ENCODE measurements at regions of chr2 and their contacts with region 1.

Region 1: GRCh38 chr2:240434728-240435456 is 571 bp upstream of the GPC1 start:
- DNase-seq: peak; percentile 97
- H3K4me3 Mint-ChIP-seq: peak overlapping the region; percentile 75
- H3K27ac Mint-ChIP-seq: peak overlapping the region; percentile 36
- H3K4me1 Mint-ChIP-seq: peaks cover 21% of the 10 kb centered on the region
- H3K27me3 Mint-ChIP-seq: peaks cover 14% of the 10 kb centered on the region
- CTCF ChIP-seq: no peak

Region 2: GRCh38 chr2:240149943-240150784 is 284.7 kb before region 1 on chr2:
- CTCF ChIA-PET with region 1: no interaction called
- intact Hi-C with region 1: loop called (anchors 1 kb)
- DNase-seq: peak; percentile 64
- H3K4me3 Mint-ChIP-seq: no peak overlapping the region
- H3K27ac Mint-ChIP-seq: no peak overlapping the region
- H3K4me1 Mint-ChIP-seq: no peaks in the 10 kb centered on the region
- H3K27me3 Mint-ChIP-seq: peaks cover 98% of the 10 kb centered on the region
- CTCF ChIP-seq: peak; percentile 92

Region 3: GRCh38 chr2:240232961-240233893 is 201.7 kb before region 1 on chr2:
- CTCF ChIA-PET with region 1: interaction called, 3 read pairs
- intact Hi-C with region 1: loop called (anchors 2 kb)
- DNase-seq: peak; percentile 93
- H3K4me3 Mint-ChIP-seq: peak overlapping the region; percentile 57
- H3K27ac Mint-ChIP-seq: no peak overlapping the region
- H3K4me1 Mint-ChIP-seq: peaks cover 30% of the 10 kb centered on the region
- H3K27me3 Mint-ChIP-seq: peaks cover 8% of the 10 kb centered on the region
- CTCF ChIP-seq: peak; percentile 93

Region 4: GRCh38 chr2:240300261-240300821 is 134.6 kb before region 1 on chr2:
- CTCF ChIA-PET with region 1: no interaction called
- intact Hi-C with region 1: loop called (anchors 10 kb)
- DNase-seq: no peak
- H3K4me3 Mint-ChIP-seq: no peak overlapping the region
- H3K27ac Mint-ChIP-seq: no peak overlapping the region
- H3K4me1 Mint-ChIP-seq: no peaks in the 10 kb centered on the region
- H3K27me3 Mint-ChIP-seq: peaks cover 62% of the 10 kb centered on the region
- CTCF ChIP-seq: no peak

Region 5: DNA sequence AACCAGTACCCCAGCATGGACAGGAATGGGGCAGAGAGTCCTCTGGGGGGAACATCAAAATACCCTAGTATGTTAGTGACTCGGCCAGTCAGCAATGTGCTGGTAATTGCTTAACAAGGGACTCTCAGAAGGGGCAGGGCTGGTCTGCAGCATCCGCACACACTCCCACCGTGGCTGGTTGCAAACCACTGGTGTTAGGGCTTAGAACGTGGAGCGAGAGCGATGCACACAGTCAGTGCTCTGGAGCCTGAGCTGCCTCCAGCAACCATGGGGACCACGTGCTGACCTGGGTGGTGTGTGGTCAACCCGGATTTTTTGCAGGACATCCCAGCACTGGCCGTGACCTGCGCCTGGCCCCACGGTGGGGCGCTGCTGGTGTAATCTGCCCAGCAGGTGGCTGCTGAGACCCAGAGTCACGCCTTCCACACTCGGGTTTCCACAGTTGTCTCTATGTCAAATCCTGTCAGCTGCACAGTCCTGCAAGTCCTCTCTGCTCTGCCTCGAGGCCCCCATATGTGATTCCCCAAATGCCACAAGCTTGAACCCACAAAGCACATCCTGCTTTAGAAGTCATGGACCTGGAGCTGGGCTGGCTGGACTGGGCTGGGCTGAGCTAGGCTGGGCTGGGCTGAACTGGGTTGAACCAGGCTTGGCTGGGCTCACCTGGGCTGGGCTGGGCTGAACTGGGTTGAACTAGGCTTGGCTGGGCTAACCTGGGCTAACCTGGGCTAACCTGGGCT is 50.0 kb before region 1 on chr2:
- CTCF ChIA-PET with region 1: interaction called, 14 read pairs
- intact Hi-C with region 1: no loop called
- DNase-seq: no peak
- H3K4me3 Mint-ChIP-seq: no peak overlapping the region
- H3K27ac Mint-ChIP-seq: no peak overlapping the region
- H3K4me1 Mint-ChIP-seq: peaks cover 8% of the 10 kb centered on the region
- H3K27me3 Mint-ChIP-seq: peaks cover 16% of the 10 kb centered on the region
- CTCF ChIP-seq: no peak

Region 6: GRCh38 chr2:240452457-240453256 is 17.8 kb after region 1 on chr2:
- CTCF ChIA-PET with region 1: no interaction called
- intact Hi-C with region 1: no loop called
- DNase-seq: peak; percentile 87
- H3K4me3 Mint-ChIP-seq: peak overlapping the region; percentile 66
- H3K27ac Mint-ChIP-seq: peak overlapping the region; percentile 70
- H3K4me1 Mint-ChIP-seq: peaks cover 23% of the 10 kb centered on the region
- H3K27me3 Mint-ChIP-seq: peaks cover 17% of the 10 kb centered on the region
- CTCF ChIP-seq: no peak

Region 7: DNA sequence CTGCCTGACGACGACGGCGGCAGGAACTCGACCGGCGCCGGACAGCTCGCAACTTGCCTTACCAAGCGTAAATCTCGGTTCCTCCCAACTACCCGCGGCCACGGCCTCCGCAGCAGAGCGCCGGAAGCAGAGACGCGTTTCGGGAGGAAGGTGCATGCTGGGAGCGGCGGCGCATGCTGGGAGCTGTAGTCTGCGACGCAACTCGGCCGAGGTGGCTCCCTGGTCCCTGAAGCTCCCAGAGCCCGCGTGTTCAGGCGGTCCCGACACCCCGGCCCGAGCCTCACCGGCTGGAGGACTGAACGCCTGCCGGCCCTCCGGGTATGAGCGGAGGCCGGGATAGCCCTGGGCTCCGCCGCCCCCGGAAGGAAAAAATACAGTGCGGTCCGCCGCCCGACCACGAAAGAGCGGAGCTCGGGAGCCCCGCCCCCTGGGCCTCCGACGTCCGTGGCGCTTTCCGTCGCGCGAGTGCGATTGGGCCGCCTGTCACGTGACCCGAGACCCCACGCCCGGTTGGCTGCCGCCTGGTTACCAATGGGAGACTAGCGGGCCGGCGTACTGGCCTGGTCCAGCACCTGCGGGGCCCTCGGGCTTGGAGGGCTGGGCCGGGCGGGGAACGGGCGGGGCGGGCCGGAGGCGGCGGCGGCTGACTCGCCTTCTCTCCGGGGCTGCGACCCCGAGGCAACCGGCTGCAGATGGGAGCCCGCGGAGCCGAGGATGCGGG is 151.5 kb after region 1 on chr2 and contains the start of gene CAPN10:
- CTCF ChIA-PET with region 1: no interaction called
- intact Hi-C with region 1: no loop called
- DNase-seq: peak; percentile 98
- H3K4me3 Mint-ChIP-seq: peak within 1 kb of the TSS; percentile 94
- H3K27ac Mint-ChIP-seq: peak within 1 kb of the TSS; percentile 84
- H3K4me1 Mint-ChIP-seq: peaks cover 38% of the 10 kb centered on the region
- H3K27me3 Mint-ChIP-seq: no peaks in the 10 kb centered on the region
- CTCF ChIP-seq: no peak
- total RNA-seq, gene CAPN10: 49.3 and 52.6 TPM in 2 replicates